Aorta (tissue), 5 donors: ENCODE measurements at regions of chr14 and their contacts with region 1.

Region 1: GRCh38 chr14:103434961-103435360 is 49.7 kb downstream of the MARK3 start:
- DNase-seq: no peak
- ATAC-seq: peak; percentile 80
- H3K4me3 ChIP-seq: no peak overlapping the region
- H3K27ac ChIP-seq: peak overlapping the region in 1 of 2 donors; percentile 51
- H3K4me1 ChIP-seq: peaks cover 2 to 6% of the 10 kb centered on the region in 2 donors
- H3K27me3 ChIP-seq: no peaks in the 10 kb centered on the region

Region 2: GRCh38 chr14:103091041-103091882 is 343.7 kb before region 1 on chr14:
- intact Hi-C with region 1: no loop called
- DNase-seq: no peak
- ATAC-seq: peak; percentile 36
- H3K4me3 ChIP-seq: peak overlapping the region in 1 of 2 donors; percentile 38
- H3K27ac ChIP-seq: no peak overlapping the region
- H3K4me1 ChIP-seq: no peaks in the 10 kb centered on the region
- H3K27me3 ChIP-seq: no peaks in the 10 kb centered on the region

Region 3: GRCh38 chr14:103385152-103385993 is 49.6 kb before region 1 on chr14 and contains the start of gene MARK3:
- intact Hi-C with region 1: loop called in 1 of 2 experiments (anchors 5 kb)
- DNase-seq: peak; percentile 99
- ATAC-seq: peak; percentile 99
- H3K4me3 ChIP-seq: peak within 1 kb of the TSS; percentile 92
- H3K27ac ChIP-seq: peak within 1 kb of the TSS; percentile 91 to 94
- H3K4me1 ChIP-seq: peaks cover 0 to 5% of the 10 kb centered on the region in 2 donors
- H3K27me3 ChIP-seq: no peaks in the 10 kb centered on the region
- total RNA-seq, gene MARK3: 77.3 to 121 TPM

Region 4: GRCh38 chr14:103398428-103399195 is 36.3 kb before region 1 on chr14:
- intact Hi-C with region 1: loop called in 1 of 2 experiments (anchors 5 kb)
- DNase-seq: no peak
- ATAC-seq: no peak
- H3K4me3 ChIP-seq: no peak overlapping the region
- H3K27ac ChIP-seq: no peak overlapping the region
- H3K4me1 ChIP-seq: peaks cover 6 to 29% of the 10 kb centered on the region in 2 donors
- H3K27me3 ChIP-seq: no peaks in the 10 kb centered on the region